Ovary (tissue), 10 donors: ENCODE measurements at regions of chr12 and their contacts with region 1.

Region 1: DNA sequence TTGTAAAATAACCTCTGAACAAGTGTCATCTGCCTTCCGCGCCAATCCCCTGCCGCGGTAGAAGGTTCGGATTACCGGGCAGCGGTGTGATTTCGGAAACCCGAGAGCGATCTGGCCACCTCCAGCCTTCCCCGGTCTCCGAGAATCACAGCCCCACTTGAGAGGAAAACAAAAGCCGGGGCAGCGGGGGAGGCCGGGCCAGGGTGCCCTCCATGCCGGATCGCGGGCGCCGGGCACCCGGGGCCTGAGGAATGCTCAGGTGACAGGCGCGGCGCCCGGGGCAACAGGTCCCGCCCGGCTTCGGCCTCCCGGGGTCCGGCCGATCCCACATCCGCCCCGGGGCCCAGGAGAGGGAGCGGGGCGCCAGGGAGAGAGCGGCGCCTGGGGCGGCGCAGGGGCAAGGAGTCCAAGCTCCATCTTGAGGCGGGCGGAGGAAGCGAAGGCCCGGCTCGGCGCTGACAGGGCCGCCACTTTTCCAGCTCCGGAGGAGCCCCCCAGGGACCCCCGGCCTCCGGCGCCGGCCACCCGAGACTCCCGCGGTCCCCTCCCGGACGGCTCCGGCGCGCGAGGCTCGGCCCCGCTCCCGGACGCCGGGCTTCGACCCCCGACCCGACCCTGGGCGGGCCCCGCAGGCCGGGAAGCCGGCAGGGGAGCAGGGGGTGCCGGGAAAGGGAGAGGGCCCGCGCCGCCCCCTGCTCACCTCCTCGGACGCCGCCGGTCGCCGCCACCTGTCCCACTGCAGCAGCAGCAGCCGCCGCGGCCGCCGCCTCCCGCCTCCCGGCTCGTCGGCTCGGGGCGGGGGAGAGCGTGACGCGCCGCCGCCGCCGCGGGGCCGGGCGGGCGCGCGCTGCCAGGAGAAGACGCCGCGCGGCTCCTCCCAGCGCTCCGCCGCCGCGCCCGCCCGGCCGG is at the start of gene CLIP1:
- DNase-seq: peak; percentile 63 to 80 (median 71)
- H3K4me3 ChIP-seq: peak within 1 kb of the TSS; percentile 85
- H3K27ac ChIP-seq: peak within 1 kb of the TSS; percentile 95 to 99
- H3K4me1 ChIP-seq: peaks cover 3% of the 10 kb centered on the region
- H3K27me3 ChIP-seq: no peaks in the 10 kb centered on the region
- CTCF ChIP-seq: peak in 2 of 3 donors; percentile 38 to 42
- EP300 ChIP-seq: no peak
- POLR2A ChIP-seq: peak; percentile 65
- total RNA-seq, gene CLIP1: 30.4 to 71.5 (median 42.3) TPM

Region 2: DNA sequence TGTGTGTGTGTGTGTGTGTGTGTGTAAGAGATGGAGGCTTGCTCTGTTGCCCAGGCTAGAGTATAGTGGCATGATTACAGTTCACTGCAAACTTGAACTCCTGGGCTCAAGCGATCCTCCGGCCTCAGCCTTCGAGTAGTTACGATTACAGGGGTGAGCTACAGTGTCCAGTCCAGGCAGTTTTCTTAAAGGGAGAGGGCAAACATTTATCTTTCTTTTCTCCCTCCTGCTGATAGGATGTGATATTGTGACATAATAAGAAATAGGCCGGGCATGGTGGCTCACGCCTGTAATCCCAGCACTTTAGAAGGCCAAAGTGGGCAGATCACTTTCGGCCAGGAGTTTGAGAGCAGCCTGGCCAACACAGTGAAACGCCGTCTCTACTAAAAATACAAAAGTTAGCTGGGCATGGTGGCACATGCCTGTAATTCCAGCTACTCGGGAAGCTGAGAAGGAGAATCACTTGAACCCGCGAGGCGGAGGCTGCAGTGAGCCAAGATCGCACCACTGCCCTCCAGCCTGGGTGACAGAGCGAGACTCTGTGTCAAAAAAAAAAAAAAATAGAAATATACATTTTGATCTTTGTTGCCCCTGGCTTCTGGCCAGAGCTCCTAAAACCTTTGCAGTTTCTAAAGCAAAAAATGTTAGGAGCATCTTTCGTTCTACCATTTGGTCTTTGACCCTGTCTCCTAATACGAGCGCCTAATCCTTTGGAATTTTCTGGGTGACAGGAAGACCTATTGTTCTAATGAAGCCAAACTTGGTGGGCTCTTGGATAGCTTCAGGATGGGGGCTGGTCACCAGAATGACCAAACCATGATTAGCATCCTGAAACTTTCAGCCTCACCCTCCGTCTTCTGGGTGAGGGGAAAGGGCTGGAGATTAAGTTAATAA is 32.4 kb after region 1 on chr12:
- intact Hi-C with region 1: loop called in 1 of 4 experiments (anchors 1 kb)
- DNase-seq: no peak
- H3K4me3 ChIP-seq: no peak overlapping the region
- H3K27ac ChIP-seq: no peak overlapping the region
- H3K4me1 ChIP-seq: no peaks in the 10 kb centered on the region
- H3K27me3 ChIP-seq: no peaks in the 10 kb centered on the region
- CTCF ChIP-seq: no peak
- EP300 ChIP-seq: no peak
- POLR2A ChIP-seq: no peak

Region 3: DNA sequence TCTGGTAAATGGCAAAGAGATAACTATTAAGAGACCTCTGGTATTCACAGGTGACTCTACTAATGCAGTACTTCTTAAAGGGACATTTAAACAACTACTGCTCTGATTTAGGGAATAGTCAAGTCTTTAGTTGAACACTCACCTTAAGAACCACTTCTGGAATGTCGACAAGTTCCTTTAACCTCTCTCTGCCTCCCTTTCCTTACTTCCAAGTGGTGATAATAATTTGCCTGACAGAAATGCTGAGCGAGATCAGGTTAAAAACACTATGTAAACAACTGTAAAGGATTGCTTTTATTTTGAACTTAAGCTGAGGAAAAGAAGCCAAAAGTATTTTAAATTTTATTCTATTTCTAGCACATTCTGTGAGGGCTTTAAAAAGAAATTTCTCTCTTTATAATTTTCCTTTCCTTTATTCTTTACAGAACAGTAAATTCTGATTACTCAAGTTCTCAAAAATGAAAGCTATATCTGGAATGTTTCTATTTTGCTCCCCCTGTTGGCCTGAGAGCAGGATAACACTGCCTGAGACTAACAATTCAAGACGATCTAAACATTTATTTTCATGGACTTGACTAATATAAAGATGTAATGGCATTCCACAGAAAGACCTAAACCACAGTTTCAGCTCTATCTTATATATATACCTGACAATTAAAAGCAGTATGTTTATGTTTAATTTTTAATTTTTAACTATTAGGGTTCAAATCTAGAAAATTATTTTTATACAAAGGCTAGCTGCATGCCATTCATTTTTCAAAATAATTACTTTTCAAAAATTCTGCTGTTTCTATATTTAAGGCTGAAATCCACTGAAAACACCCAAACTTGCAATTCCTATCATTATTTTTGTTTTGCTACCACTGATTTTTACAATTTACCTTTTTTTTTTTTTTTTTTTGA is 49.5 kb after region 1 on chr12:
- intact Hi-C with region 1: loop called in 1 of 4 experiments (anchors 10 kb)
- DNase-seq: no peak
- H3K4me3 ChIP-seq: no peak overlapping the region
- H3K27ac ChIP-seq: peak overlapping the region in 1 of 2 donors; percentile 19
- H3K4me1 ChIP-seq: no peaks in the 10 kb centered on the region
- H3K27me3 ChIP-seq: no peaks in the 10 kb centered on the region
- CTCF ChIP-seq: peak; percentile 27 to 84 (median 79)
- EP300 ChIP-seq: no peak
- POLR2A ChIP-seq: no peak